ENCODE measurements at regions of chr19 and their contacts with region 1.

Region 1: GRCh38 chr19:55258828-55259539 is at the start of gene PPP6R1:
- DNase-seq: peak; percentile 99
- H3K4me3 ChIP-seq: peak within 1 kb of the TSS; percentile 79 to 96 (median 90)
- H3K27ac ChIP-seq: peak within 1 kb of the TSS; percentile 78 to 98 (median 96)
- H3K4me1 ChIP-seq: peaks cover 36 to 56% (median 51%) of the 10 kb centered on the region in 6 donors
- H3K27me3 ChIP-seq: no peaks in the 10 kb centered on the region
- CTCF ChIP-seq: peak in 5 of 11 experiments; percentile 8 to 43 (median 19)
- POLR2A ChIP-seq: peak; percentile 63 to 85 (median 68)
- total RNA-seq, gene PPP6R1: 113 to 150 (median 133) TPM

Region 2: DNA sequence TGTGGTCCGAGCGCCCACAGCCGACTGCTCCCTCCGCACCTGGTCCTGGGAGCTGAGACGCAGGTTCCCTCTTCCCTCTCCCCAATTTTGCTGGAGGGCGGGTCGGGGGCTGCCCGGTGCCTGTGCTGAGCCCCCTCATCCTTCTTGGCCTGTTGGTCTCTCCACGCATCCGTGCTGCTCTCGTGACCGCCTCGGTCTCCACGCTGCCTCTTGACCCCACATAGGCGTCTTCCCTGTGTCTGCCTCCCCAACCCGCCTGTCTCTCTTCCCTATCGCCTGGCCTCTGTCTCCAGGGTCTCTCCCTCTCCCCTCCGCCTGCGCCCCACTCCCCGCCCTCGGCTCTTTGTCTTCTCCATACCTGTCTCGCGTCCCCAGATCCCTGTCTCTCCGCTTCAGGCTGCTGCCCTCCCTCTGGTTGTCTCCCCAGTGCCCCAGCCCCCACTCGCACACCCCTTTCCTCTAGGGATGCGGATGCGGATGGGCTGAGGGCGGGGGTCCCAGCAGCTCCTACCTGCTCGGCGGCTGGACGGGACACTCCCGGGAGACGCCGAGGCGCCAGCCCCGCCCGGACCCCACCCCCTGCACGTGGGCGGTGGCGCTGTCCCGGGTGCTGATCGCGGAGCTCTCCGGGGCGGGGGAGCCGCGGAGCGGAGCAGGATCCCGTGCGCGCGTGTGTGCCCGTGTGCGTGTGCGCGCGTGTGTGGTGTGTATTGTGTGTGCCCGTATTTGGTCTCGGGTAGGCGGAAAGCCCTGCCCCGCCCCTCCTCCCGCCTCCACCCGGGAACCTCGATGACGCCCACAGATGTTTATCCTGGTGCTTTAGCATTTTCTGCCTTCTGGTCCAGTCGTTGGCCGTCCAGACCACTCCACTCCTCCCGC is 79.1 kb before region 1 on chr19 and contains the start of gene SYT5:
- intact Hi-C with region 1: loop called (anchors 10 kb)
- DNase-seq: peak; percentile 82
- H3K4me3 ChIP-seq: peak within 1 kb of the TSS in 7 of 8 donors; percentile 5 to 70 (median 35)
- H3K27ac ChIP-seq: no peak within 1 kb of the TSS
- H3K4me1 ChIP-seq: peaks cover 8 to 26% (median 19%) of the 10 kb centered on the region in 6 donors
- H3K27me3 ChIP-seq: peaks cover 10 to 94% (median 75%) of the 10 kb centered on the region in 7 donors
- CTCF ChIP-seq: no peak
- POLR2A ChIP-seq: no peak
- total RNA-seq, gene SYT5: 1.4 TPM in 1 of 7 donors, not detected in the others

Region 3: DNA sequence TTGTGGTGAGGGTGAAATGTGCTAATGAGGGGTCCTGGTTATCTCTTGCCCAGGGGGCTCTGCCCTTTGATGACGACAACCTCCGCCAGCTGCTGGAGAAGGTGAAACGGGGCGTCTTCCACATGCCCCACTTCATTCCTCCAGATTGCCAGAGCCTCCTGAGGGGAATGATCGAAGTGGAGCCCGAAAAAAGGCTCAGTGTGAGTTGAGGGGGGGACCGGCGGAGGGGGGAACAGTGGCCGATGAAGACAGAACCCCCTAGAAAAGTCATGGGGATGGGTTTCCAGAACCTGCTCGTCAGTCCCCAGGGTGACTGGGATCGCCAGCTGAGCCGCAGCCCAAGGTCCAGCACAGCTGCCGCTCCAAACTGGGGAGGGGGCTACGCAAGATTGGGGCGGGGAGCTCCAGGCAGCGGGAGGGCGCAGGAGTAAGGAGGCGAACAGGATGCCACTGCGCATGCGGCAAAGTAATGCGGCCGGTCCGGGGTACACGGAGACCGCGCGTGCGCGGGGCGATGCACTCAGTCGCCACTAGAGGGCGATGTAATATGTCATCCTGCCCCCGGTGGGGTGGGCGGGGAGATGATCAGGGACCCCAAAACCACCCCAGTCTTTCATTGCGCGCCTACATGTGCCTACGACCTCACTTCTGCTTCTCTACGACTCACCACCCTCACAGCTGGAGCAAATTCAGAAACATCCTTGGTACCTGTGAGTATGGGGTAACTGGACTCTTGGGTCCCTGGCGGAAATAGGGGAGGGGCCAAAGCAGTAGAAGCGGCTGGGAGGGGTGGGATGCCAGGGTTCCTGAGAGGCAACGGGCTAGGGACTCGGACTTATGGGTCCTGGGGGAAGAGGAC is 42.7 kb after region 1 on chr19:
- intact Hi-C with region 1: no loop called
- DNase-seq: peak; percentile 97
- H3K4me3 ChIP-seq: peak overlapping the region; percentile 18 to 69 (median 30)
- H3K27ac ChIP-seq: peak overlapping the region in 6 of 8 donors; percentile 43 to 77 (median 60)
- H3K4me1 ChIP-seq: peaks cover 0 to 18% (median 12%) of the 10 kb centered on the region in 6 donors
- H3K27me3 ChIP-seq: peaks cover 0 to 10% (median 0%) of the 10 kb centered on the region in 7 donors
- CTCF ChIP-seq: peak; percentile 96 to 100 (median 99)
- POLR2A ChIP-seq: no peak

Measured in spleen (tissue), 13 donors.